Vagina (tissue), 2 donors: ENCODE measurements at regions of chr7 and their contacts with region 1.

Region 1: GRCh38 chr7:134113655-134114054 is 13.5 kb upstream of the LRGUK start:
- DNase-seq: no peak
- H3K4me3 ChIP-seq: no peak overlapping the region
- H3K27ac ChIP-seq: no peak overlapping the region
- H3K4me1 ChIP-seq: no peaks in the 10 kb centered on the region
- H3K27me3 ChIP-seq: no peaks in the 10 kb centered on the region
- CTCF ChIP-seq: no peak
- POLR2A ChIP-seq: no peak

Region 2: GRCh38 chr7:134098072-134098471 is 15.6 kb before region 1 on chr7:
- intact Hi-C with region 1: loop called (anchors 2 kb)
- DNase-seq: no peak
- H3K4me3 ChIP-seq: no peak overlapping the region
- H3K27ac ChIP-seq: no peak overlapping the region
- H3K4me1 ChIP-seq: no peaks in the 10 kb centered on the region
- H3K27me3 ChIP-seq: no peaks in the 10 kb centered on the region
- CTCF ChIP-seq: no peak
- POLR2A ChIP-seq: no peak

Region 3: GRCh38 chr7:134134004-134134403 is 20.3 kb after region 1 on chr7:
- intact Hi-C with region 1: no loop called
- DNase-seq: no peak
- H3K4me3 ChIP-seq: no peak overlapping the region
- H3K27ac ChIP-seq: no peak overlapping the region
- H3K4me1 ChIP-seq: no peaks in the 10 kb centered on the region
- H3K27me3 ChIP-seq: no peaks in the 10 kb centered on the region
- CTCF ChIP-seq: no peak
- POLR2A ChIP-seq: no peak